GM12878 (cell line): ENCODE measurements at regions of chr9 and their contacts with region 1.

Region 1: GRCh38 chr9:106420511-106420944 is 442.4 kb upstream of the ZNF462 start:
- DNase-seq: peak; percentile 76
- ATAC-seq: peak; percentile 76
- H3K4me3 ChIP-seq: no peak overlapping the region
- H3K27ac ChIP-seq: no peak overlapping the region
- H3K4me1 ChIP-seq: peaks cover 17% of the 10 kb centered on the region
- H3K27me3 ChIP-seq: no peaks in the 10 kb centered on the region
- CTCF ChIP-seq: no peak
- EP300 ChIP-seq: peak; percentile 20 to 68; a peak in 2 of 4 replicates
- POLR2A ChIP-seq: no peak
- RAD21 ChIP-seq: no peak

Region 2: DNA sequence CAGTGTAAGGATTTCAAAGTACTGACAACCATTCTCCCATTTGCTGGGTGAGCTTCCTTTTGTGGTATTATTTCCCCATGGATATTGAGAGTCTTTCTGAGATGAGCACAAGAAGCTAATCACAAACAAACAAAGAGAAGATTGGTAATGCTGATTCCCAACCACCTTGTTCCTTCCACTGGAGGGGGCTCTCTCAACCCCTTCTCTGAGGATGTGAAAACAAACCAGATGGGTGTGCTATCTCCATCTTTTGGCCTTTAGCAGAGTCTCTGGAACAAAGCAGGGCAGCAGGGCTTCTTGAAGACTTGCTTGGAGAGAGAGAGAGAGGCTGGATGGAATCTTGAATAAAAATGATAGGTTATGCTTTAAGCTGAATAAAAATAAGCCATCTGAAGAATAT is 134.3 kb before region 1 on chr9:
- CTCF ChIA-PET with region 1: interaction called, 14 read pairs
- POLR2A ChIA-PET with region 1: no interaction called
- RAD21 ChIA-PET with region 1: interaction called, 8 read pairs
- SMC1A ChIA-PET with region 1: interaction called, 16 read pairs
- in situ Hi-C with region 1: no loop called
- intact Hi-C with region 1: no loop called
- DNase-seq: no peak
- ATAC-seq: peak; percentile 87
- H3K4me3 ChIP-seq: no peak overlapping the region
- H3K27ac ChIP-seq: no peak overlapping the region
- H3K4me1 ChIP-seq: no peaks in the 10 kb centered on the region
- H3K27me3 ChIP-seq: no peaks in the 10 kb centered on the region
- CTCF ChIP-seq: peak in 2 of 3 experiments; percentile 41 to 45; a peak in 4 of 6 replicates
- EP300 ChIP-seq: no peak
- POLR2A ChIP-seq: no peak
- RAD21 ChIP-seq: no peak

Region 3: DNA sequence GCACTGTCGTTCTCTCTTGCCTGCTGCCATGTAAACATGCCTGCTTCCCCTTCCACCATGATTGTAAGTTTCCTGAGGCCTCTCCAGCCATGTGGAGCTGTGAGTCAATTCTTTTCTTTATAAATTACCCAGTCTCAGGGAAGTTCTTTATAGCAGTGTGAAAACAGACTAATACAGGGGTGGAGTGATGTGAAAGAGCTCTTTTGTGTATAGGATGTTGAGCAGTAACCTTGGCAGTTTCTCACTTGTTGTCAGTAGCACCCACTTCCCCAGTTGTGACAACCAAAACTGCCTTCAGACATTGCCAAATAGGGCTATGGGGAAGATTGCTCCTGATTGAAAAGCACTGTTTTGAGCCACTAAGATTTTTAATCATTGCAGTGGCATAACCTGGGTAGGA is 109.7 kb before region 1 on chr9:
- CTCF ChIA-PET with region 1: no interaction called
- POLR2A ChIA-PET with region 1: interaction called, 3 read pairs
- RAD21 ChIA-PET with region 1: interaction called, 7 read pairs
- SMC1A ChIA-PET with region 1: interaction called, 9 read pairs
- in situ Hi-C with region 1: no loop called
- intact Hi-C with region 1: loop called (anchors 2 kb)
- DNase-seq: peak; percentile 31
- ATAC-seq: peak; percentile 72
- H3K4me3 ChIP-seq: no peak overlapping the region
- H3K27ac ChIP-seq: no peak overlapping the region
- H3K4me1 ChIP-seq: no peaks in the 10 kb centered on the region
- H3K27me3 ChIP-seq: no peaks in the 10 kb centered on the region
- CTCF ChIP-seq: no peak
- EP300 ChIP-seq: peak; percentile 62 to 72; a peak in 2 of 4 replicates
- POLR2A ChIP-seq: no peak
- RAD21 ChIP-seq: no peak

Region 4: DNA sequence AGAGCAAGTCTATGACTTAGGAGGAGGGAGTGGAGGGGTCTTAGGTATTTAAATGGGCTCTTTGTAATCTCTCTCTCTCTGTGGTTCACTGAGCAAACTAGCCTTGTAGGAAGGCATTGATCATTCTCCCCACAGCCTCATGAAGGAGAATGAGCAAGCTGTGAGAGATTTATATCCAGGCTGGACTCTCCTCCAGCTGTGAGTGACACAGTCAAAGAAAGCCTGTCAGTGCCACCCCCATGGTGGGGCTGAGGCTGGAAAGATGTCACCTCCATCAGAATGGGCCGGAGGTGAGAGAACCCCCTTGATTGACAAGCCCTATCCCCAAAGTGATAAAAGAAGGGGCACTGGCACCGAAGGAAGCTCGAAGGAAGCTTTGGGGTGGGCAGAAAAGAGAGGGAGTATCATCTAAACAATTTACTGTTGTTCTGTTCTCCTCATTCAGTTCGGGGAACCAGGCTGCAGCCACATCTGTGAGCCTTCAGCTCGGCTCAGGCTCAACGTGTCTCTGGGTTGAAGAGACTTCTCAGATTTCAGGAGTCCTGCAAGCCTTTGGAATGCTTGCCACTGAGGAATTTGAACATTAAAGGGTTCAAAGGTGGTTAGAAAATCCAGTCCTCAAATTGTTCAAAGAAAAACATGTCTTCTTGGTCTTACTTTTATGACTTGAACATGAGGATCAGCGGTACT is 95.8 kb before region 1 on chr9:
- CTCF ChIA-PET with region 1: interaction called, 4 read pairs
- POLR2A ChIA-PET with region 1: no interaction called
- RAD21 ChIA-PET with region 1: interaction called, 4 read pairs
- SMC1A ChIA-PET with region 1: interaction called, 3 read pairs
- in situ Hi-C with region 1: no loop called
- intact Hi-C with region 1: loop called (anchors 5 kb)
- DNase-seq: no peak
- ATAC-seq: peak; percentile 4; the same call in 1 of the 3 replicates
- H3K4me3 ChIP-seq: no peak overlapping the region
- H3K27ac ChIP-seq: no peak overlapping the region
- H3K4me1 ChIP-seq: no peaks in the 10 kb centered on the region
- H3K27me3 ChIP-seq: no peaks in the 10 kb centered on the region
- CTCF ChIP-seq: no peak
- EP300 ChIP-seq: no peak
- POLR2A ChIP-seq: no peak
- RAD21 ChIP-seq: no peak

Region 5: GRCh38 chr9:106438928-106439327 is 18.4 kb after region 1 on chr9:
- CTCF ChIA-PET with region 1: interaction called, 4 read pairs
- POLR2A ChIA-PET with region 1: no interaction called
- RAD21 ChIA-PET with region 1: no interaction called
- SMC1A ChIA-PET with region 1: interaction called, 13 read pairs
- in situ Hi-C with region 1: no loop called
- intact Hi-C with region 1: no loop called
- DNase-seq: no peak
- ATAC-seq: no peak
- H3K4me3 ChIP-seq: no peak overlapping the region
- H3K27ac ChIP-seq: no peak overlapping the region
- H3K4me1 ChIP-seq: no peaks in the 10 kb centered on the region
- H3K27me3 ChIP-seq: no peaks in the 10 kb centered on the region
- CTCF ChIP-seq: no peak
- EP300 ChIP-seq: no peak
- POLR2A ChIP-seq: no peak
- RAD21 ChIP-seq: no peak

Region 6: DNA sequence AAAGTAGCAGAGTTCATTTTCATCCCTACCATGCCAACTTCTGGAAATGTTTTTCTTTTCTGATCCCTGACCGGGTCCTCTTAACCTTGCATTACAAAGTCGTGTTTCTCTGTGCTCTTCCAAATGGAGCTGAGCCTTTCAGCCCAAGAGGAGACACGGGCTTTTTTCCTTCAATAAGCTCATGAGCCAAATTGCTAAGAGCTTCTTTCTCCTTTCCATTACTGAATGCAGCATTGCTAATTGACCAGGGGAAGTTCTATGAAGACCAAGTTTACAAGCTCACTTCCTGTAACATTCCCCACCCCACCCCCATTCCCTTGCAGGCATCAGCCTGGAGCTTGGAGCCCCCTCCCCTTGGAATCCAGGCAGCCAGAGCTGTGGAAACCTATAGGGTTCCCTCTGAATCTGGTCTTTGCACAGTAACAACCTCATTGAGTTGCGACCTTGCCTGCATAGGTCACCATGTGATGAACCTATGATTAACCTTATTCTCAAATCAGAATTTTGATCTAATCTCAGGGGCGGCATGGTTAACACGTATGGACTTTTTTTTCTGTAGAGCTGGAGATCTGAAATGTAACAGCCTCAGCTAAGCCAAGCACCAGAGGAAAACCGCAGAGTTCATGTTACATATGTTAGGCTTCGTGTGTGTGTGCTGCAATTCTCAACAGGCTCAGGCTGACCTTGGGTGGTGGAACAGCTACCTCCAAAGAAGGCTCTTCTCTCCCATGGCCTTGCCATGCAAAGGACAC is 46.8 kb after region 1 on chr9:
- CTCF ChIA-PET with region 1: interaction called, 3 read pairs
- POLR2A ChIA-PET with region 1: interaction called, 4 read pairs
- RAD21 ChIA-PET with region 1: interaction called, 11 read pairs
- SMC1A ChIA-PET with region 1: interaction called, 7 read pairs
- in situ Hi-C with region 1: no loop called
- intact Hi-C with region 1: loop called (anchors 1 kb)
- DNase-seq: no peak
- ATAC-seq: peak; percentile 58
- H3K4me3 ChIP-seq: no peak overlapping the region
- H3K27ac ChIP-seq: peak overlapping the region; percentile 6; the same call in 1 of the 2 replicates
- H3K4me1 ChIP-seq: peaks cover 6% of the 10 kb centered on the region; the same call in 1 of the 2 replicates
- H3K27me3 ChIP-seq: no peaks in the 10 kb centered on the region
- CTCF ChIP-seq: no peak
- EP300 ChIP-seq: no peak
- POLR2A ChIP-seq: no peak
- RAD21 ChIP-seq: no peak

Region 7: GRCh38 chr9:106675745-106676144 is 255.2 kb after region 1 on chr9:
- CTCF ChIA-PET with region 1: no interaction called
- POLR2A ChIA-PET with region 1: no interaction called
- RAD21 ChIA-PET with region 1: no interaction called
- SMC1A ChIA-PET with region 1: no interaction called
- in situ Hi-C with region 1: no loop called
- intact Hi-C with region 1: no loop called
- DNase-seq: no peak
- ATAC-seq: no peak
- H3K4me3 ChIP-seq: no peak overlapping the region
- H3K27ac ChIP-seq: no peak overlapping the region
- H3K4me1 ChIP-seq: no peaks in the 10 kb centered on the region
- H3K27me3 ChIP-seq: no peaks in the 10 kb centered on the region
- CTCF ChIP-seq: no peak
- EP300 ChIP-seq: no peak
- POLR2A ChIP-seq: no peak
- RAD21 ChIP-seq: no peak

Region 8: DNA sequence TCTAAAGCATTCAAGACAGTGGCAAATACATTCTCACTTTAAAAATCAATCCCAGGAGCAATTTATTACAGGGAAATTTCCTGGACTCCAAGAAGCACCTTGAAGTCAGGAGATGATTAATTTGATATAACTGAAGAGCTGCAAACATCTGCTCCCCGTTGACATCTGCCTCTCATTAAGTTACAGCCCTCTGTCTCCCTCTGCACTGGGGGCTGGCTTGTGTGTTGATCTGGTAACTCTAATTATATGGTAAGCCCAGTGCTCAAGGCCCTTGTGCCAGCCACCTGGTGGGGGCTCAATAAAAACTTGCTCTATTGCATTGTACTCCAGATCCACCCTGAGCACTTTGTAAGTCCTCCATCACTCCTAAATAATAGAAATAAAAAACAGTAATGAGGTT is 311.4 kb after region 1 on chr9:
- CTCF ChIA-PET with region 1: no interaction called
- POLR2A ChIA-PET with region 1: no interaction called
- RAD21 ChIA-PET with region 1: no interaction called
- SMC1A ChIA-PET with region 1: no interaction called
- in situ Hi-C with region 1: no loop called
- intact Hi-C with region 1: no loop called
- DNase-seq: no peak
- ATAC-seq: no peak
- H3K4me3 ChIP-seq: no peak overlapping the region
- H3K27ac ChIP-seq: no peak overlapping the region
- H3K4me1 ChIP-seq: no peaks in the 10 kb centered on the region
- H3K27me3 ChIP-seq: no peaks in the 10 kb centered on the region
- CTCF ChIP-seq: no peak
- EP300 ChIP-seq: no peak
- POLR2A ChIP-seq: no peak
- RAD21 ChIP-seq: no peak